Head of caudate nucleus (tissue), 42 donors: ENCODE measurements at regions of chr19 and their contacts with region 1.

Region 1: GRCh38 chr19:10928525-10929401 is at the starts of genes TIMM29 and YIPF2:
- DNase-seq: peak; percentile 91 to 99 (median 98)

Region 2: GRCh38 chr19:10730923-10731322 is 197.8 kb before region 1 on chr19:
- intact Hi-C with region 1: no loop called
- DNase-seq: peak in 35 of 42 donors; percentile 19 to 79 (median 54)

Region 3: DNA sequence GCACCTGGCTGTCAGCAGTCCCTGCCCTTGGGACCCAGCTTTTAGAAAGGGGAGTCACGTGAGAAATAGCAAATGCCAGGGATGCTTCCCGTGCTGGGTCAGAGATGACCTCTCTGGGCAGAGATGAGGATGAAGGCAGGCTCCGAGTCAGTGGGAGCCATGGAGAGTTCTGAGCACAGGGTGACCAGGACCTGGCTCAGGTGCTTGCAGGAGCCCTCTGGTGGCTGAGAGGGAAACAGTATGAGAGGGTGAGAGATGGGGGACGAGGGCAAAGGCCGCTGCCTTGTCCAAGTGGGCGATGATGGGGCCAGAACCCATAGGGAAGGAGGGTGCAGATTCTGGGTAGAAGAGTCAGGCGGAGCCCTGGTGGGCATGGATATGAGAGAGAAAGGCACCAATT is 108.6 kb before region 1 on chr19:
- intact Hi-C with region 1: no loop called
- DNase-seq: no peak

Region 4: DNA sequence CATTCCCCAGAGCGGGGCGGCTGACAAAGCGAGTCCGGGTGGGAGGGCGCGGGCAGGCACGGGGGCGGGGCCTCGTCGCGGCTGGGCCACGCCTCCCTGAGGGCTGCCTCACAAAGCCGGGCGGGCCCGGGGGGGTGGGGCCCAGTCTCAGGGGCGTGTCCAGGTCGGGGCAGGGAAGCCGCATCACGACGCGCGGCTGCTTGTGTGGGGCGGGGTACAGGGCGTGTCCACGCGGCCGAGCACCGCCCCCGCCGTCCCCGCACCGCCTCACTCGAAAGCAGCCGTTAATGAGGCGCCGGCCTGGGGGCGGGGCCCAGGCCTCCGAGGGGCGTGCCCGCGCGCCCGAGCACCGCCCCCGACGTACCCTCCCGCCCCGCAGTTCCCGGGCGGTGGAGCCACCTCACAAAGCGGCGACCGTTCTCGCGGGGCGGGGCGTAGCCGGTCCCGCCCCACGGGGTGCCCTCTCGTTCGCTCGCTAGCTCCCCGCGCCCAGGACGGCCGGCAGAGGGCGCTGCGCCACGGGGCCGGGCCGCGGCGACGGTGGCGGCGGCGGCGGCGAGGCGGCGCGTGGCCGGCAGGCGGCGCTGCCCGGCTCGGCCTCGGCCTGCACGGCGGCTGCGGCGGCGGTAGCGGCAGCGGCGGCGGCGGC is 57.7 kb before region 1 on chr19 and contains the start of gene CARM1:
- intact Hi-C with region 1: loop called (anchors 10 kb)
- DNase-seq: peak; percentile 97 to 100 (median 99)

Region 5: GRCh38 chr19:11041966-11042627 is 113.3 kb after region 1 on chr19:
- intact Hi-C with region 1: no loop called
- DNase-seq: no peak